PC-9 (cell line): ENCODE measurements at regions of chr2 and their contacts with region 1.

Region 1: DNA sequence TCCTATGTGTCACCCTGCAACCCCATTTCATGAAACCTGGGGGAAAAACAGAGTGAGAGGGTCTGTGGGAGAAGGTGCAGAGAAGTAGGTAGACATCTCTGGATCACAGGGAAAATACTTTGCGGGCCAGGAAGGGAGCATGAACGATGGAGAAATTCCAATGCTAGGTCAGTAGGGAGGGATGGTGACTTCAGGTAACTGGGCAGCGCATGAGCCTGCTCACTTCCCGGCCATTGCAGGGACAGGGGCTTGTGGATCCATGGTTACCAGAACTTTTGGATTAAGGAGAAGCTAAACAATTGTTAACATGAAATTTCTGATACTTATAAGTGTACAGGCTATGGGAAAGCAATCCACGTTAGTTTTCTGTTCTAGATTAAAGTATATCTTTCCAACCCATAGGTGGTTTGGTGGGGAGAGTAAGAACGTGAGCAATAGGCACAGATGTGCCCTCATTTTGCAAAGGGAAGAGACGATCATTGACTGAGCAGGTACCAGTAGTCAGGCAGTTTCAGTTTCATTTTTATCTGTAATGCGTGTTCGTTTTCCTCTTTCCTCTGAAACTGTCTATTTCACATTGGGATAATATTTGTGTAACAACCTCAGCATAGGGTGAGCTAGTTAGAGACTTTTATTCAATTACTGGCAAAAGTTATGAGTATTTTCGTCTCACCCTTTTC is 65.0 kb downstream of the NYAP2 start:
- DNase-seq: no peak
- H3K4me3 ChIP-seq: peak overlapping the region; percentile 26; the same call in 1 of the 2 replicates
- H3K27ac ChIP-seq: no peak overlapping the region
- H3K4me1 ChIP-seq: 0 out of 2 replicates have a peak, but pooled peaks cover 7% of the 10 kb centered on the region
- H3K27me3 ChIP-seq: no peaks in the 10 kb centered on the region
- CTCF ChIP-seq: no peak

Region 2: GRCh38 chr2:225282858-225283710 is 181.4 kb before region 1 on chr2:
- CTCF ChIA-PET with region 1: no interaction called
- POLR2A ChIA-PET with region 1: no interaction called
- intact Hi-C with region 1: loop called (anchors 5 kb)
- DNase-seq: no peak
- H3K4me3 ChIP-seq: no peak overlapping the region
- H3K27ac ChIP-seq: no peak overlapping the region
- H3K4me1 ChIP-seq: no peaks in the 10 kb centered on the region
- H3K27me3 ChIP-seq: no peaks in the 10 kb centered on the region
- CTCF ChIP-seq: peak; percentile 83

Region 3: DNA sequence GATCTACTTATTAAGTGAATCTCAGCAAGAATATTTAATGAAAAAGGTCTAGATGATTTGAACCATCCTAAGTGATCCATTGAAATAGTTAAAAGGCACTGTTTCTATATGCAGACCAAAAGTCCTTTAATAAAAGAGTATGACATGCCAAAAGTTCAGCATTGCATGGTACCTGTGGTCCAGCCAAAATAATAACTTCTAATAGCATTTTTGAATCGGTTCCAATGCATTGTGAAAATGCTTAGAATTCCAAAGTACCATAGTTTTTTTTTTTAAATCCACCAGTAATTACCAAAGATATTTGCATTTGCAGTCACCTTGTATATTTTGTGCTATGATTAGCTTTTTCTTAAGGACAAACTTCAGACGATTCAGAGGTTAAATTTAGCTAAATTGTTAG is 14.9 kb after region 1 on chr2:
- CTCF ChIA-PET with region 1: no interaction called
- POLR2A ChIA-PET with region 1: no interaction called
- intact Hi-C with region 1: loop called (anchors 1 kb)
- DNase-seq: no peak
- H3K4me3 ChIP-seq: no peak overlapping the region
- H3K27ac ChIP-seq: no peak overlapping the region
- H3K4me1 ChIP-seq: no peaks in the 10 kb centered on the region
- H3K27me3 ChIP-seq: no peaks in the 10 kb centered on the region
- CTCF ChIP-seq: no peak

Region 4: DNA sequence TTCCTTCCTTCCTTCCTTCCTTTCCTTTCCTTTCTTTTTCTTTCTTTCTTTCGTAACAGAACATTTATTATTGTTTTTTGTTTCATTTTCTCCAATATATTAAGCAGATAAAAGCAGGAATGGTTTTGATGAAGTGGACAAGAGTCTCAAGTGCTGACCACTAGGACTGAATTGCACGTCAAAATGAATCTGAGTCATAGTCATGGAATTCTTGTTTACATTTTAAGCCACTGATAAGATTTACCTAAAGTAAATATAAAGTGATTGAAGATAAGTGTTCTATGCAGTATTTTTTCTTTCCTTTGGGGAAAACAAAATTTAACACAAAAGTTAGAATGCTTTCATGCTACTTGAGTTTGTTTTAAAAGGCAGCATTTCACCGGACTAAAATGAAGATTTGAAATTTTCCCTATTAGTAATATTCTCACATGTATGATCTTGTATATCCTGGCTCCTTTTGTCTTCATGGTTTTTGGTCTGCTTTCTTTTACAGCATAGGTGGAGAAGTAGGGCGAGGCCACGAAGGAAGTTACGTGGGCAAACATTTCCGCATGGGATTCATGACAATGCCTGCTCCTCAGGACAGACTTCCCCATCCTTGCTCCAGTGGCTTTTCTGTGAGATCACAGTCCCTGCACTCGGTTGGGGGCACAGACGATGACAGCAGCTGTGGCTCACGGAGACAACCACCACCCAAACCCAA is 48.5 kb after region 1 on chr2:
- CTCF ChIA-PET with region 1: no interaction called
- POLR2A ChIA-PET with region 1: no interaction called
- intact Hi-C with region 1: loop called (anchors 1 kb)
- DNase-seq: peak; percentile 39 to 47
- H3K4me3 ChIP-seq: no peak overlapping the region
- H3K27ac ChIP-seq: no peak overlapping the region
- H3K4me1 ChIP-seq: peaks cover 10% of the 10 kb centered on the region; the same call in 1 of the 2 replicates
- H3K27me3 ChIP-seq: no peaks in the 10 kb centered on the region
- CTCF ChIP-seq: no peak

Region 5: GRCh38 chr2:227415538-227416424 is 1951.3 kb after region 1 on chr2:
- CTCF ChIA-PET with region 1: no interaction called
- POLR2A ChIA-PET with region 1: no interaction called
- intact Hi-C with region 1: no loop called
- DNase-seq: peak; percentile 34 to 68
- H3K4me3 ChIP-seq: no peak overlapping the region
- H3K27ac ChIP-seq: peak overlapping the region; percentile 71
- H3K4me1 ChIP-seq: peaks cover 53% of the 10 kb centered on the region
- H3K27me3 ChIP-seq: no peaks in the 10 kb centered on the region
- CTCF ChIP-seq: no peak